ENCODE measurements at regions of chr19 and their contacts with region 1.

Region 1: DNA sequence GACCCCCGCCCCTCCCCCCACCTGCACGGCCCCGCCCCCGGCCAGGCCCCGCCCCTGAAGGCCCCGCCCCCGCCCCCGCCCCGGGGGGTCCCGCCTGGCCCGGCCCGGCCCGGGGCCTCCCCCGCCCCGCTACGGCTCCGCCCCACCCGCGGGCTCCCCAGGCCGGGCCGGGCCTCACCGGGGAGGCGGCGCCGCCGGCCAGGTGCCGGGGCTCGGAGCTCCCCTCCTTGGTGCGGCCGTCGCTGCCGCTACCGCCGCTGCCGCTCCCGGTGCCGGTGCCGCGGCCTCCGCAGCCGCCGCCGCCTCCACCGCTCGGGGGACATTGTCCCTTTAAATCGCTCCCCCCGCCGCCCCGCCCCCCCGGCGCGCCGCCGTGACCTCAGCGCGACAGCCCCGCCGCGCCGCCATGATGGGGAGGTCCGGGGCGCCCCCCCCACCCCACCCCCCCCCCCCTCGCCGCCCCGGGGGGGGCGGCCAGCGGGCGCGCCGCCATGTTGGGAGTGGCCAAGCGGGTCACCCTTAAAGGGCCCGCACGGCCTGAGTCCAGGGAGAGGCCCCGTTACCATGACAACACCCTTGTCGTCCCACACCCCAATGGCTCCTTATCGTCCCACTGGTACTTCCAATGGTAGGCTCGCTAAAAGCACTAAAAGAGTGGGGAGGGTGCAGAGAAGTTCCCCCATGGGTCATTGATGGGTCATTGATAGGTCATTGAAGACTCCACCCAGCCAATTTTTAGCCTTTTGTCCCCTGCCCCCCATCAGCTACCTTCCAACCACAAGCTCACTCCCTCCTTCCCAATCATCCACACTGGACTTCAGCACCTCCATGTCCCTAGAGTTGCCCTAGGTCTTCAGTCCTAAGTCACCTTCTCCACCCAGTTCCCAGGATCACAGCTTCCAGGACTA is at the start of gene WIZ:
- DNase-seq: peak; percentile 65
- H3K4me3 ChIP-seq: peak within 1 kb of the TSS; percentile 50 to 58 (median 53)
- H3K27ac ChIP-seq: no peak within 1 kb of the TSS
- H3K4me1 ChIP-seq: peaks cover 11% of the 10 kb centered on the region
- H3K27me3 ChIP-seq: no peaks in the 10 kb centered on the region
- CTCF ChIP-seq: no peak
- total RNA-seq, gene WIZ: 8.8 to 39.6 TPM

Region 2: DNA sequence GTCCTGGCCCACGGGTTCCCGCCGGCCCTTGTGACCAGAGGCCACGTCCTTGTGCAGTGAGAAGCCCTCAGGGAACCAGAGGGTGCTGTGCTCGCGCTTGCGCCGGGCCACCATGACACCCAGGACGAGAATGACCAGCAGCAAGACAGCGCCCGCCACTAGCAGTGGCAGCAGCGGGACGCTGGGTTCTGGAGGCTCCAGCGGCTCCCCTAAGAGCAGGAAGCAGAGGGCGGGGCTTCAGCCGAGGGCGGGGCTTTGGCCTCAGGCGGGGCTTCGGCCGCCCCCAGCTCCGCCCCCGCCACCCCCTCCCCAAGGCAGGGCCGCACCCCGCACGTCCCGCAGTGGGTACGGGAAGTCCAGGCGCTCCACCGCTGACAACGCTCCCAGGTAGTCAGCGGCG is 279.5 kb before region 1 on chr19:
- CTCF ChIA-PET with region 1: interaction called, 11 read pairs
- dilution Hi-C with region 1: no loop called
- in situ Hi-C with region 1: no loop called
- intact Hi-C with region 1: no loop called
- DNase-seq: no peak
- H3K4me3 ChIP-seq: no peak overlapping the region
- H3K27ac ChIP-seq: no peak overlapping the region
- H3K4me1 ChIP-seq: no peaks in the 10 kb centered on the region
- H3K27me3 ChIP-seq: no peaks in the 10 kb centered on the region
- CTCF ChIP-seq: no peak

Region 3: DNA sequence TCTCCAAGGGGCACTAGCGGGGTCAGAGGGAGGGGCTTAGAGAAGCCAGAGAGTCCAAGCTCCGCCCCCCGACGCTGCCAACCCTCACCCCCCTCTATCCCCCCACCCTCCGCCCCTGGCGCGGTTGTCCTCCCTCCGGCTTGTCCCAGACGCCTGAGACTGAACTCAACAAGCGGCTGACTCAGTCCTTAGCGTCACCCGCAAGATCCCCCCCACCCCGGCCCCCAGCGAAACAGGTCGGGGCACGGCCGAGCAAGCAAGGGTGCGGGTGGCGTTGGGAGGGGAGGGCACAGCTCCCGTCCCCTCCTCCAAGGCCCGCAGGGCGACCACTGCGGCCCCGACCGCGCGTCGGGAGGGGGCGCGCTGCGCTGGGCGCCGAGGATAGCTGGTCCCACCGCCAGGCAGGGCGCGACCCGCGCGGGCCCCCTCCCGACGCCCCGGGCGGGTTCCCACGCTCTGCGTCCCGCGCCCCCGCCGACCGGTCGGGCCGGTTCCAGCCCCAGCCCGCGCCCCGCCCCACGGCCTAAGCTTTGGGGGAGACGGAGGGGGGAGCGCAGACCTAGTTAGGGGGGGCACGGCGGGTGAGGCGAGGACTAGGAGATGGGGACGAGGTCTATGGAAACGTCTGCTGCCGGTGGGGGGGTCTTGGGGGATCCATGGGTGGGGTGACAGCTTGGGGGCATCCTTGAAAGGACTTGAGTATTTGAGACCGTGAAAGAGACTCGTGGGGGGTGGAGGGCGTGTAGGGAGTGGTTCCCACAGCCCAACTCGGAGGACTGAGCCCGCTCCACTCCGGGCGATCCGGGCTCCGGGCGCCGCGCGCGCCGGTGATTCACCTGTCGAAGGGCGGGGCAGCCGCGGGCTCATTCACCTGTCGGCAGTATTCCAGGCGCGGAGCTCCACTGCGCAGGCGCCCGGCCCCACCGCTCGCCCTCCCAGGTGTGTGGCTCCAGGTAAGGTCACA is 254.2 kb before region 1 on chr19:
- CTCF ChIA-PET with region 1: no interaction called
- dilution Hi-C with region 1: no loop called
- in situ Hi-C with region 1: no loop called
- intact Hi-C with region 1: loop called (anchors 10 kb)
- DNase-seq: peak; percentile 84
- H3K4me3 ChIP-seq: peak overlapping the region; percentile 31 to 50 (median 47)
- H3K27ac ChIP-seq: no peak overlapping the region
- H3K4me1 ChIP-seq: peaks cover 14% of the 10 kb centered on the region
- H3K27me3 ChIP-seq: no peaks in the 10 kb centered on the region
- CTCF ChIP-seq: peak in 1 of 2 donors; percentile 25

Region 4: GRCh38 chr19:15418588-15419412 is 31.1 kb before region 1 on chr19 and contains the start of gene AKAP8L:
- CTCF ChIA-PET with region 1: no interaction called
- dilution Hi-C with region 1: no loop called
- in situ Hi-C with region 1: no loop called
- intact Hi-C with region 1: loop called (anchors 2 kb)
- DNase-seq: peak; percentile 99
- H3K4me3 ChIP-seq: peak within 1 kb of the TSS; percentile 80 to 99 (median 92)
- H3K27ac ChIP-seq: peak within 1 kb of the TSS; percentile 60
- H3K4me1 ChIP-seq: peaks cover 23% of the 10 kb centered on the region
- H3K27me3 ChIP-seq: no peaks in the 10 kb centered on the region
- CTCF ChIP-seq: peak; percentile 51 to 77
- total RNA-seq, gene AKAP8L: 55.0 to 75.9 TPM

Measured in mammary epithelial cell (primary cell).